Heart left ventricle (tissue), 16 donors: ENCODE measurements at regions of chr15 and their contacts with region 1.

Region 1: GRCh38 chr15:62138124-62138523 is 27.0 kb downstream of the C2CD4B start:
- DNase-seq: no peak
- ATAC-seq: peak in 1 of 4 donors; percentile 16
- H3K4me3 ChIP-seq: no peak overlapping the region
- H3K27ac ChIP-seq: no peak overlapping the region
- H3K4me1 ChIP-seq: peaks cover 0 to 6% (median 0%) of the 10 kb centered on the region in 12 donors
- H3K27me3 ChIP-seq: no peaks in the 10 kb centered on the region
- CTCF ChIP-seq: no peak
- POLR2A ChIP-seq: no peak

Region 2: DNA sequence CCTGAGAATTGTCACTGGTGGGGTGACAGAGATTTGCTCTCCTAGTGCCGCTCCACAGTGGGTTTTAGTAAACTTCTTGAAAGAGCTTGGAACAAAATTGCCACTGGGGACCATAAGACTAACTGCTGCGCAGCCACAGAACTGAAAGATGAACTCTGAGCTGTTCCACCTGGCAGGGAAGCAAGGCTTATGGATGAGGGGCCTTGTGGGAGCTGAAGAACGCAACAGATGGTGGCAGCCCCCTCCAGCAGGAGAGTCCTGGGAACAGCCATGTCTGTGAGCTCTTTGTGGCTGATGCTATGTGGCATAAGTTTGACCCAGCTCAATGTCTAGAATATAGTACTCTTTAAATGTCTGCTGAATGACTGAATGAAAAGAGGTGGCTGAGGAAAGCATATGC is 93.7 kb after region 1 on chr15:
- intact Hi-C with region 1: loop called in 1 of 10 experiments (anchors 10 kb)
- DNase-seq: no peak
- ATAC-seq: no peak
- H3K4me3 ChIP-seq: no peak overlapping the region
- H3K27ac ChIP-seq: no peak overlapping the region
- H3K4me1 ChIP-seq: no peaks in the 10 kb centered on the region
- H3K27me3 ChIP-seq: peaks cover 0 to 2% (median 0%) of the 10 kb centered on the region in 9 donors
- CTCF ChIP-seq: no peak
- POLR2A ChIP-seq: no peak